Gastrocnemius medialis (tissue), 4 donors: ENCODE measurements at regions of chr2 and their contacts with region 1.

Region 1: DNA sequence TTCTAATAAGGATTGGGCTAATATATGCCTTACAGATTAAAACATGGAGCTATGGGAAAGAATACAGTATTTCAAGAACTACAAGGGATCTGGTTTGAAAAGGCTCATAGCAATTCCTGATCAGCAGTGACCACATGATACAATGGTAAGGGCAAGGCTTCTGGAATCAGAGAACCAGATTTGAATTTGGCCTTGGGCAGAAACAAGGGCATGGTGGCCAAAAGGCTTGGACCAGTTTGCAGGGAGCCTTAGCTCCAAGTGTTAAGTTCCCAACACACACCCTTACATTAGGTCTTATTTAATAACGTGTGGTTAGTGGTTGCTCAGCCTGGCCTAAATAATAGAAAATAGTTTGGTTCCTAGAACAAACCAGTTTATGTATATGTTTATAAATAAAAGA is 87.7 kb downstream of the ZAP70 start:
- DNase-seq: no peak
- ATAC-seq: no peak
- H3K4me3 ChIP-seq: no peak overlapping the region
- H3K27ac ChIP-seq: no peak overlapping the region
- H3K4me1 ChIP-seq: no peaks in the 10 kb centered on the region
- H3K27me3 ChIP-seq: no peaks in the 10 kb centered on the region
- CTCF ChIP-seq: no peak
- POLR2A ChIP-seq: no peak

Region 2: GRCh38 chr2:97834610-97835009 is 33.6 kb after region 1 on chr2:
- in situ Hi-C with region 1: no loop called
- intact Hi-C with region 1: no loop called
- DNase-seq: no peak
- ATAC-seq: no peak
- H3K4me3 ChIP-seq: no peak overlapping the region
- H3K27ac ChIP-seq: no peak overlapping the region
- H3K4me1 ChIP-seq: peaks cover 0 to 7% of the 10 kb centered on the region in 2 donors
- H3K27me3 ChIP-seq: no peaks in the 10 kb centered on the region
- CTCF ChIP-seq: no peak
- POLR2A ChIP-seq: no peak

Region 3: DNA sequence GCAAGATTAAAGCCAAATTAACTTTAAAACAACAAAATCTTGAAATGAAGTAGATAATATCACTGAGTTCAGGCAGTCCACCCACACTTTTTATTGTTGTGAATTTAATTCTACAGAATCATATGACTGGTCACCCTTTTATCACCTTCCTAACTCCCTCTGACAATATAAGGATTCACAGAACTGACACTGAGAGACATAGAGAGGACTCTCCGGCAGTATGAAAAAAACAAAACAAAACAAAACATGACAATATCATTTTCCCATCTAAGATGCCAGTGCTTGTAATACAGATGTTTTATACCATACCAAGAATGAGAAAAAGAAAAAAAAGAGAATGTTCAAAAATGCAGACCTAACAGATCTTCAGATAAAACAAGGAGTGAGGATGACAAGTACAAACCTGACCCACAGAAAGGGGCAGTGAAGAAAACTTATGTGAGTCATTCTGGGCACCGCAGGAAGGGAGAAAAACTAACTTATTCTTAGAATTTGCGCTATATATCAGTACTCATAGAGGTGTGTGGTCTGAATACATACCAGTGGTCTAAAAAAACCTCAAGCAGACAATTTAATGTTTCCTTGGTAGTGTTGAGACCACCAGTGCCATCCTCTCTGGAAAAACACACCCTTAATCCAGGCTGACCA is 49.0 kb after region 1 on chr2:
- in situ Hi-C with region 1: no loop called
- intact Hi-C with region 1: no loop called
- DNase-seq: no peak
- ATAC-seq: peak in 1 of 2 donors; percentile 12
- H3K4me3 ChIP-seq: no peak overlapping the region
- H3K27ac ChIP-seq: peak overlapping the region in 2 of 4 donors; percentile 12 to 29
- H3K4me1 ChIP-seq: peaks cover 8 to 20% of the 10 kb centered on the region in 2 donors
- H3K27me3 ChIP-seq: no peaks in the 10 kb centered on the region
- CTCF ChIP-seq: no peak
- POLR2A ChIP-seq: no peak

Region 4: DNA sequence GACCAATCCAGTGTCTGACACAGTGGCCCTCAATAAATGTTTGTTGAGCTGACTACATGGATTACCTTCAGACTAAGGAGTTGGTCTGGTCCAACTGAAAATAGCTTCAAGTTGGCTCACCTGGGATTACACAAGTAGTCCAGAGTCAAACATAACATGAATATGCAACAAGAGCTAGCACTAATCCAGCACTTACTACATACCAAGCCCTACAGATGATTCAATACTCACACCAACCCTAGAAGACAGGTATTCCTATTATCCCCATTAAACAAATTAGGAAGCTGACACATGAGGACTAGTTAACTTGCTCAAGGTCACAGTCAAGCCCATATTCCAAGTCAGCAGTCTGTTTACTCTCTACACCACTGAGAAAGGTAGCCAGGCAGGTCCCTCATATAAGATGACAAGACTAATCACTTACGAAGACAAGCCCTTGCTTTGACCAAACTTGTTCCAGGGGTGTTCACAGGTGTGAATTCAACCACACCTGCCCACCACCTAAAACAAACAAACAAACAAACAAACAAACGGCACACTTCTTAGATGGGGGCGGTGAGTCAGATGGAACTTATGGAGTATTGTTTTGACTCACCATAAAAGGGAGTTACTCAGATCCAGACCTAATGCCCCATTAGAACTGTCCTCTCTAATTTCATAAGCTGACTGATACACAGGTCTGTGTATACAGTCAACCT is 165.6 kb after region 1 on chr2:
- in situ Hi-C with region 1: no loop called
- intact Hi-C with region 1: no loop called
- DNase-seq: no peak
- ATAC-seq: peak; percentile 65 to 88
- H3K4me3 ChIP-seq: no peak overlapping the region
- H3K27ac ChIP-seq: peak overlapping the region; percentile 58 to 70 (median 61)
- H3K4me1 ChIP-seq: peaks cover 59 to 67% of the 10 kb centered on the region in 2 donors
- H3K27me3 ChIP-seq: no peaks in the 10 kb centered on the region
- CTCF ChIP-seq: no peak
- POLR2A ChIP-seq: no peak

Region 5: GRCh38 chr2:98379672-98380535 is 578.9 kb after region 1 on chr2:
- in situ Hi-C with region 1: loop called in 3 of 4 experiments (anchors 5 to 10 kb)
- intact Hi-C with region 1: no loop called
- DNase-seq: no peak
- ATAC-seq: no peak
- H3K4me3 ChIP-seq: no peak overlapping the region
- H3K27ac ChIP-seq: no peak overlapping the region
- H3K4me1 ChIP-seq: peaks cover 0 to 7% of the 10 kb centered on the region in 2 donors
- H3K27me3 ChIP-seq: no peaks in the 10 kb centered on the region
- CTCF ChIP-seq: no peak
- POLR2A ChIP-seq: no peak